Vagina (tissue), 2 donors: ENCODE measurements at regions of chr18 and their contacts with region 1.

Region 1: GRCh38 chr18:42298759-42299675 is 344.0 kb downstream of the PIK3C3 start:
- DNase-seq: no peak
- H3K4me3 ChIP-seq: peak overlapping the region; percentile 8 to 30
- H3K27ac ChIP-seq: peak overlapping the region; percentile 64
- H3K4me1 ChIP-seq: no peaks in the 10 kb centered on the region
- H3K27me3 ChIP-seq: no peaks in the 10 kb centered on the region
- CTCF ChIP-seq: peak; percentile 57 to 85 (median 67)
- POLR2A ChIP-seq: no peak

Region 2: DNA sequence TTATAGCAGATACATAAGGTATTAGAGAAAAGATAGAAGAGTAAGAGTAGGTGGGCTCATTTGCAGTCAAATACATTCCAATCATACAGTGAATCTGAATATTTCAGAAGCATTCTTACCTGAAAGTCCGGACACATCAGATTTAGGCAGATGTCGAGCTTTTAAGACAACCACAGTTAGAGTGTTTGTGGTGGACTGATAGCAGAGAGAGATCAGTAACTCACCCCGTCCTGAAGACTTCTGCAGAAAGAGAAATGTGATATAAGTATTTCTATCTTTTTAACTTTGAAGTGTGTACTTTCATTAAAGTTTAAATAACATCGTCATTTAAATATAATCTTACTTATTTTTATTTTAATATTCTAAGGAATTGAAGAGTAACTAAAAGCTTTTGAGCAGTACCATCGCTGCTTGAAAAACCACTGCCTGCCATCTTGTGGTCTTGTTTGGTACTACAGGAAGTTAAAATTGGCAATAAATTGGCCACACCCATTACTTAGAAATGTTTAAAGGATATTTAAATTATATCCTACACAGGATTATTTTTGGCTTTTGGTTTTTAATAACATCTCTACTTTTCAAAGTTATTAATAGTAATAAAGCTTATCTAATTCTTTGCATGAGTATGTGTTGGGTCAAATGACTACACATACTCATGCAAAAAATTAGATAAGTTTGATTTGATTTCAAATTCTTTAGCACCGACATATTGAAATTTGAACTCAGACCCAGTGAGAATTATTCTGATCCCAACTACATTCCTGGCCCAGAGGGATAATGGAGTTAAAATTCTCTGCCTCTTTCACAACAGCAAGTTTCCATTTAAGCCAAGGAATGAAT is 972.8 kb after region 1 on chr18:
- intact Hi-C with region 1: loop called (anchors 10 kb)
- DNase-seq: no peak
- H3K4me3 ChIP-seq: no peak overlapping the region
- H3K27ac ChIP-seq: no peak overlapping the region
- H3K4me1 ChIP-seq: no peaks in the 10 kb centered on the region
- H3K27me3 ChIP-seq: no peaks in the 10 kb centered on the region
- CTCF ChIP-seq: peak; percentile 27 to 63 (median 61)
- POLR2A ChIP-seq: no peak